GM12878 (cell line): ENCODE measurements at regions of chr13 and their contacts with region 1.

Region 1: DNA sequence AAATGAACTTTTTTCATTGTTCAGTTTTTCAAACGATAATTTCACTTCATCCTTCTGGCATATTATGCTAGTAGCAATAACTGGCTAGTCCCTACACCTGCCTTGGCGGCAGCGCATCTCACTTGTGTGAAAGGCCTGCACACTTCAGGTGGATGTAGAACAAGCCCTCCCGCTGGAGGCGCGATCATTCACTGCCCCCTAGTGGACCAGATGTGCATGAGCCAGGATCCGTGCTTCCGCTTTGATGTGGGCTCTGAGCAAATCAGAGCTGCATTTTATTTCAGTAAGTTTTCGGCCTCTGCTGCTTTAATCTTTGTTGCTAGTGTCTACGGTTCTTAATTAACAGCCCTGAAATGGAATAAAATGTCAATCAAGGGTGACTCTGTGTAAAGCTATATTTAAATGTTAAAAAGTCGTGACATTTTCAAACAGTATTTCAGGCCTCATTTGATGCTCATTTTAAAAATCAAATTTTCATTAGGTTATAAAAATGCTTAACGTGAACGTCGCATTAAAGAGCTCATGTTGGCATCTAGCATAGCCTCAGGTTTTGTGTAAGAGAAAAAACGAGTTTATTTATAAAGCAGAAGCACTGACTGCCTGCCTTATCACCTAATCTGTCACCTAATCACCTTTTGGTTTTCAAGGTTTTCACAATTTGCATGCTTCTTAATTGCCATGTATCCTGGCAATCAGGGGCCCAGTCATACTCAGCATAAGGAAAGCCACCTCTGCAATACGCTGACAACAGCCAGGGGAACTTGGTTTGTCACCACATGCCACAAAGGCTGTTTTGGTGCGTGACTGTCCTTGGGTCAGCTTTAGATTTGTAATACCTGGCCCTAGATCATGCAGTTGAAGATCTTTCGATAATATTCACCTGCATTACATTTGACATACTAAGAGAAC is 112.2 kb downstream of the TEX26 start:
- DNase-seq: peak; percentile 56
- ATAC-seq: peak; percentile 97
- H3K4me3 ChIP-seq: no peak overlapping the region
- H3K27ac ChIP-seq: no peak overlapping the region
- H3K4me1 ChIP-seq: peaks cover 20% of the 10 kb centered on the region
- H3K27me3 ChIP-seq: no peaks in the 10 kb centered on the region
- CTCF ChIP-seq: peak; percentile 90 to 97 (median 94)
- EP300 ChIP-seq: no peak
- POLR2A ChIP-seq: no peak
- RAD21 ChIP-seq: peak; percentile 95

Region 2: DNA sequence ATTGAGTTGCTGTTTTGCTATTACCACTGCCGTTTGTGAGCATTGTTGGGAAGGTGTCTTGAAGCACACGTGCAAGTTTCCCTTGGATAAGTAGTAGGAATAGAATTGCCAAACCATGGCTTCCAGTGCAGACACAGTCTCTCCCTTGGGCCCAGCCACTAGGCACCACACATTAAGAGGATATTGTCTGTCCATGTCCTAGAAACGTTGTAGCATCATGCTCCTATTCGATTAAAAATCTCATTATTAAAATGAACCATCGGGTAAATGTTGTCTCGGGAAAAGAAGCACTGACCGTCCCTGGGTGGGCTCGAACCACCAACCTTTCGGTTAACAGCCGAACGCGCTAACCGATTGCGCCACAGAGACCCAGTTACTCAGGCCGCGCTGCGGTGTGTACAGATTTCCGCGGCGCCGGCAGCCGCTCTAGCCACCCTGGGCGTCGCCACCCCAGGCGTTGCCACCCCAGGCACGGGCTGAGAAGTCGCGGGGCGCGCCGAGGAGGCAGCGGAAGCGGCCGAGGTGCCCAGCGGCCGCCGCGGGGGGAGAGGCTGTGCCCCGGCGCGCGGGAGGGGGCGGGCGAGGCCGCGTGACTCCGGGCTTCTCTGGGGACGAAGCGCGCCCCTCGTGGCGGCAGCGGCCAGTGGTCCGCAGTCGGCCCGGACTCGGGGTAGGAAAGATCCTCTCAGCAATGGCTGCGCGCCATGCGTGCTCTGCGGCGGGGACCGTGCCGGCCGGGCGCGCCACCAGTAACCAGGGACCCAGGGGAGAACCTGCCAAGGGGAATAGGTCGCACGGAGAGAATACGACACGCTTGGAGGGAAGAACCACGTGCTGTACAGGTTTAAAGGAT is 370.7 kb before region 1 on chr13:
- CTCF ChIA-PET with region 1: no interaction called
- POLR2A ChIA-PET with region 1: no interaction called
- RAD21 ChIA-PET with region 1: no interaction called
- SMC1A ChIA-PET with region 1: no interaction called
- in situ Hi-C with region 1: no loop called
- intact Hi-C with region 1: loop called (anchors 10 kb)
- DNase-seq: peak; percentile 67
- ATAC-seq: peak; percentile 99
- H3K4me3 ChIP-seq: peak overlapping the region; percentile 54; the same call in 1 of the 2 replicates
- H3K27ac ChIP-seq: no peak overlapping the region
- H3K4me1 ChIP-seq: no peaks in the 10 kb centered on the region
- H3K27me3 ChIP-seq: no peaks in the 10 kb centered on the region
- CTCF ChIP-seq: peak; percentile 64 to 73 (median 71)
- EP300 ChIP-seq: peak in 1 of 2 experiments; percentile 50; a peak in 1 of 4 replicates
- POLR2A ChIP-seq: peak; percentile 57
- RAD21 ChIP-seq: peak; percentile 41

Region 3: DNA sequence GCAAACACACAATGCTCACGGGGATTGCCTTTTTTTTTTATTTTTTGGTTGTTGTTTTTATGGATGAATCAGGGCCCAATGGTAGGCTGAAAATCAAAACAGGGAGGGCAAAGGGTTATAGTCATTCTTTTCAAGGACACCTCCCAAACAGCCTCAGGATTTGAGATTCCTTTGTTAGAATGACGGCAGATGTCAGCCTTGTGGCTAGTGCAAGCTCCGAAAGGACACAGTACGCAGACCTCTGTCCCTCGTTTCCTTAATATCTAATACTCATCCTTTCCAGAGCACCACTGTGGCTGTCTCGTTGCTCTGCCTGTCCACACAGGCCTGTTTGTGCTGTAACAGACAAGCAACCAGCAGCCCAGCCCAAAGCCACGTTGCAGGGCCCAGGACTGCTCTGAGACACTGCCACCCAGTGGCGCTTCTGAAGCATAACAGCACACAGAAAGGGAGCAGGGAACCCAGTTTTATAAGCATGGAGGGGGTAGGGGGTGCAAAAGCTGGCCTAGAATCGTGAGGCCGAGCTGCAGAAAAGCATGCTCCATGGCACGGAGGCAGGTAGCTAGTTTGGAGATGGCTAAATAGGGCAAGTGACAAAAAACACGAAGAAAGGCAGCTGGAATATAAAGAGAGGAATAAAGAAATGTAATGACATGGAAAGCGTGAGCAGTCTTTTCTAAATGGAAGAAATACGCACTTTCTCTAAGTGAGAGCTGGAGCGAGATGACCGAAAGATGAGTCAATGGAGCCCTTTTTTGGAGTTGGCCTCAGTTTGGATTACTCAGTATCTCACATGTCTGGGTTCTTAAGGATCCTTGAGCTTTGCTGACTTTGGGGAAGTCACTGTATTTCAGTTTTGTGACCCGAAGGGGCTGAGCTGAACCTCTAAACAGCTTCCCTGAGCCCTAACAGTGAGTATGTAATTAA is 179.2 kb before region 1 on chr13:
- CTCF ChIA-PET with region 1: interaction called, 8 read pairs
- POLR2A ChIA-PET with region 1: no interaction called
- RAD21 ChIA-PET with region 1: interaction called, 11 read pairs
- SMC1A ChIA-PET with region 1: interaction called, 8 read pairs
- in situ Hi-C with region 1: no loop called
- intact Hi-C with region 1: loop called (anchors 1 kb)
- DNase-seq: no peak
- ATAC-seq: peak; percentile 98
- H3K4me3 ChIP-seq: no peak overlapping the region
- H3K27ac ChIP-seq: no peak overlapping the region
- H3K4me1 ChIP-seq: no peaks in the 10 kb centered on the region
- H3K27me3 ChIP-seq: peaks cover 0 to 4% of the 10 kb centered on the region in 2 experiments; a peak in 2 of 4 replicates
- CTCF ChIP-seq: peak; percentile 91 to 92 (median 92)
- EP300 ChIP-seq: no peak
- POLR2A ChIP-seq: no peak
- RAD21 ChIP-seq: peak; percentile 93

Region 4: GRCh38 chr13:30968846-30969245 is 75.8 kb before region 1 on chr13:
- CTCF ChIA-PET with region 1: interaction called, 18 read pairs
- POLR2A ChIA-PET with region 1: no interaction called
- RAD21 ChIA-PET with region 1: no interaction called
- SMC1A ChIA-PET with region 1: interaction called, 4 read pairs
- in situ Hi-C with region 1: no loop called
- intact Hi-C with region 1: no loop called
- DNase-seq: no peak
- ATAC-seq: no peak
- H3K4me3 ChIP-seq: no peak overlapping the region
- H3K27ac ChIP-seq: no peak overlapping the region
- H3K4me1 ChIP-seq: no peaks in the 10 kb centered on the region
- H3K27me3 ChIP-seq: no peaks in the 10 kb centered on the region; a peak in 1 of 4 replicates
- CTCF ChIP-seq: no peak
- EP300 ChIP-seq: no peak
- POLR2A ChIP-seq: no peak
- RAD21 ChIP-seq: no peak

Region 5: GRCh38 chr13:30995331-30995730 is 49.3 kb before region 1 on chr13:
- CTCF ChIA-PET with region 1: interaction called, 10 read pairs
- POLR2A ChIA-PET with region 1: no interaction called
- RAD21 ChIA-PET with region 1: interaction called, 3 read pairs
- SMC1A ChIA-PET with region 1: no interaction called
- in situ Hi-C with region 1: no loop called
- intact Hi-C with region 1: no loop called
- DNase-seq: no peak
- ATAC-seq: no peak
- H3K4me3 ChIP-seq: no peak overlapping the region
- H3K27ac ChIP-seq: no peak overlapping the region
- H3K4me1 ChIP-seq: no peaks in the 10 kb centered on the region
- H3K27me3 ChIP-seq: peaks cover 0 to 2% of the 10 kb centered on the region in 2 experiments; a peak in 2 of 4 replicates
- CTCF ChIP-seq: no peak
- EP300 ChIP-seq: no peak
- POLR2A ChIP-seq: no peak
- RAD21 ChIP-seq: no peak

Region 6: DNA sequence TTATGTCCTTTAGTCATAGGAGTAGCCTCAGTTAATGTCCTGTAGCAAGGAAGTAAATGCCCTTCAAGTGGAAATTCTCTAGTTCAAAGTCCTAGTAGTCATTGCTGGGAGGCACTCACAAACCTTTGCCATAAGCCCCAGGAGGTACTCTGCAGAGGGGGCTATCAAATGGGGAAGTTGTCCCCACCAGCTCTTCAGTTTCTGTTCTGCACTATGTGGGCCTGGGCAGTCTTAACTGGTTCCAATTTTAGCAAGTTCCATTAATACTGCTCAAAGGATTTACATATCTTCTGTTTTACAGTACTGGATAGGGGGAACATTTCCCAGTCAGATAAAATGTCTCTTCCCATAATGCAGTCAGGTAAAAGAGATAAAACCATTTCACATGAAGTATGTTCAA is 256.5 kb after region 1 on chr13:
- CTCF ChIA-PET with region 1: no interaction called
- POLR2A ChIA-PET with region 1: no interaction called
- RAD21 ChIA-PET with region 1: no interaction called
- SMC1A ChIA-PET with region 1: no interaction called
- in situ Hi-C with region 1: no loop called
- intact Hi-C with region 1: no loop called
- DNase-seq: no peak
- ATAC-seq: no peak
- H3K4me3 ChIP-seq: no peak overlapping the region
- H3K27ac ChIP-seq: no peak overlapping the region
- H3K4me1 ChIP-seq: no peaks in the 10 kb centered on the region
- H3K27me3 ChIP-seq: no peaks in the 10 kb centered on the region
- CTCF ChIP-seq: no peak
- EP300 ChIP-seq: no peak
- POLR2A ChIP-seq: no peak
- RAD21 ChIP-seq: no peak